B cell (primary cell): ENCODE measurements at regions of chr1 and their contacts with region 1.

Region 1: GRCh38 chr1:235253219-235253962 is 74.6 kb downstream of the ARID4B start:
- DNase-seq: peak; percentile 76
- ATAC-seq: peak; percentile 86
- H3K4me3 ChIP-seq: no peak overlapping the region
- H3K4me3 Mint-ChIP-seq: no peak overlapping the region
- H3K27ac ChIP-seq: peak overlapping the region in 1 of 2 donors; percentile 19
- H3K27ac Mint-ChIP-seq: no peak overlapping the region
- H3K4me1 ChIP-seq: peaks cover 1 to 2% of the 10 kb centered on the region in 2 donors
- H3K4me1 Mint-ChIP-seq: peaks cover 11% of the 10 kb centered on the region
- H3K27me3 ChIP-seq: no peaks in the 10 kb centered on the region
- H3K27me3 Mint-ChIP-seq: no peaks in the 10 kb centered on the region
- CTCF ChIP-seq: peak; percentile 94

Region 2: GRCh38 chr1:235100194-235100772 is 153.1 kb before region 1 on chr1:
- CTCF ChIA-PET with region 1: no interaction called
- POLR2A ChIA-PET with region 1: no interaction called
- intact Hi-C with region 1: loop called (anchors 5 kb)
- DNase-seq: peak; percentile 85
- ATAC-seq: peak; percentile 79
- H3K4me3 ChIP-seq: no peak overlapping the region
- H3K4me3 Mint-ChIP-seq: peak overlapping the region; percentile 34
- H3K27ac ChIP-seq: no peak overlapping the region
- H3K27ac Mint-ChIP-seq: peak overlapping the region; percentile 71
- H3K4me1 ChIP-seq: peaks cover 7 to 38% of the 10 kb centered on the region in 2 donors
- H3K4me1 Mint-ChIP-seq: peaks cover 37% of the 10 kb centered on the region
- H3K27me3 ChIP-seq: no peaks in the 10 kb centered on the region
- H3K27me3 Mint-ChIP-seq: no peaks in the 10 kb centered on the region
- CTCF ChIP-seq: no peak

Region 3: DNA sequence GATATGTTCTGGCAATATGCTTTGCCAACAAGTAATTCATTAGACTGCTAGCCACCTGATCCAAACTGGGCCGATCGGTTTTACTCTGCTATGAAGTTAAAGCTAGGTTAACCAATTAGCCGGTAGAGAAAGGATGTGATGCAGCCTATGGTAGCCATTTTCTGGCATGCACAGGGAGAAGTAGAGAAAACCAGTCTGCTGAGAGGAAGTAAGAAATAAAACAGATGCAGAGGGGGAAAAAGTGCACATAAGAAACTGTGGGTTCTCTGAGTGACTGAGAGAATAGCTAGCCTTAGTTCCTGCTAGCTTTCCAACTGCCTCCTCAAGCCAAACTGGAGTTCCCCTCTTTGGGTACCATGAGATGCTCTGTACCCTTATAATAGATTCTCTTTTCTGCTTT is 21.8 kb after region 1 on chr1:
- CTCF ChIA-PET with region 1: interaction called, 11 read pairs
- POLR2A ChIA-PET with region 1: no interaction called
- intact Hi-C with region 1: no loop called
- DNase-seq: peak; percentile 72
- ATAC-seq: peak; percentile 83
- H3K4me3 ChIP-seq: no peak overlapping the region
- H3K4me3 Mint-ChIP-seq: peak overlapping the region; percentile 2
- H3K27ac ChIP-seq: peak overlapping the region; percentile 21 to 86
- H3K27ac Mint-ChIP-seq: peak overlapping the region; percentile 3
- H3K4me1 ChIP-seq: peaks cover 40 to 41% of the 10 kb centered on the region in 2 donors
- H3K4me1 Mint-ChIP-seq: peaks cover 70% of the 10 kb centered on the region
- H3K27me3 ChIP-seq: no peaks in the 10 kb centered on the region
- H3K27me3 Mint-ChIP-seq: no peaks in the 10 kb centered on the region
- CTCF ChIP-seq: no peak

Region 4: DNA sequence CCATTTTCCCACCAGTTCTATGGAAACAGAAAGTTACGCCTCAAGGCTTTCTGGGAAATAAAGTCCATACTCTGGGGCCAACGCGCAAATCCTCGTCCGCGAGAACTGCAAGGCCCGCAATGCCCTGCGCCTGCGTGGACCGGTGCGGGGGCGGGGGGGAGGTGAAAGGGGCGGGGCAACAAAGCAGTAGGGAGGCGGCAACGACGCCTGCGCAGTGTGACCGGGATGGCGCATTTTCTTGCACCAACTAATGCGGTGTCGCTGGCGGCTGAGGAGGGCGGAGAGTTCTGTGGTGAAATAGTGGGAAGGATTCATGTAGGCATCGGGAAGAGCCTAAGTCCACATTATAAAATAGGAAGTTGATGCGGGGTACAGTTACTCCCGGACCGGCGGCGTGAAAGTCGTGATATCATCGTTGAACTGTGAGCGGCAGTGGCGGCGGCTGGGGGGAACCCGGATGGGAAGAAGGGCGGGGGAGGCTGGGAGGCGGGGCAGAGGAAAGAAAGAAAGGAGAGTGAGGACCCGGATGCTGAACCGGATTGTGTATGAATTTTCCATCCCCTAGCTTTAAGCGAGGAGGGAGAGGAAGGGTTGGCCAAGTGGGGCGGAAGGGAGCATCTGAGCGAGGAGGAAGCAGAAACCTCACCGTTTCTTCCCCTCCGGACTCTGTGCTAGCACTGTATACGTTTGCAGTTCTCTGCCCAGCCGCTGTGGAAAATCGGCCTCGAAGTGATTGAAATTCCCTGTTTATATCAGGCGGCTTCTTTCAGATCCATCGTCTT is 75.2 kb after region 1 on chr1 and contains the start of gene GGPS1:
- CTCF ChIA-PET with region 1: interaction called, 4 read pairs
- POLR2A ChIA-PET with region 1: no interaction called
- intact Hi-C with region 1: loop called (anchors 1 kb)
- DNase-seq: peak; percentile 98
- ATAC-seq: peak; percentile 75
- H3K4me3 ChIP-seq: peak within 1 kb of the TSS; percentile 89 to 99 (median 99)
- H3K4me3 Mint-ChIP-seq: no peak within 1 kb of the TSS
- H3K27ac ChIP-seq: peak within 1 kb of the TSS; percentile 89 to 98
- H3K27ac Mint-ChIP-seq: no peak within 1 kb of the TSS
- H3K4me1 ChIP-seq: peaks cover 33 to 58% of the 10 kb centered on the region in 2 donors
- H3K4me1 Mint-ChIP-seq: peaks cover 53% of the 10 kb centered on the region
- H3K27me3 ChIP-seq: no peaks in the 10 kb centered on the region
- H3K27me3 Mint-ChIP-seq: no peaks in the 10 kb centered on the region
- CTCF ChIP-seq: peak; percentile 36
- total RNA-seq, gene GGPS1: 43.6 and 46.8 TPM in 2 replicates